Heart left ventricle (tissue), 16 donors: ENCODE measurements at regions of chr17 and their contacts with region 1.

Region 1: DNA sequence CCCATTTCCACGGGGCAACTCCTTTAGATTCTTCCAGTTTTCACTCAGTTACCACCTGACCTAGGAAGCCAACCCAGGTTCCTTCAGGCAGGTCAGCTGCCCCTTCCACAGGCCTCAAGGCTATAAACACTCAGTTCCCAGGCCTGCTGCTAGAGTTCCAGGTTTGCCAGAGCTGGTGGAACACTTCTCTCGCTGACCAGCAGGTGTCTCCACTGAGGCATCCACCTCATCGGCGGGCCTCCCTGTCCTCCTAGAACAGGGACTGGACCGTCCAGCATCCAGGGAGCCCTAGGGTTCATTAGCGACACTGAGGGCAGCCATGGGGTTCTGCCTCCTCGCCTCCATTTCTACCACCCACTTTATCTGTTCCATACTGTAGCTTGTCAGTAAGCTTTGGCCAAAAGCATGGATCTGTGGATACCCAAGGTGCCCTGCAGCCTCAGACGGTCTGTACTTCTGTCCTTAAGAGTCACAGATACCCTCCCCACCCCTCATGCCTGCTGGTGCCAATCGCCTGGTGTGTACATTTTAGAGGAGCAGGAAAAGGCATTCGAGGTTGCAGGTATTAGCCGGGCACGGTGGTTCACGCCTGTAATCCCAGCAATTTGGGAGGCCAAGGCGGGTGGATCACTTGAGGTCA is 29.0 kb downstream of the PIMREG start:
- DNase-seq: peak; percentile 61 to 81 (median 70)
- ATAC-seq: peak in 3 of 4 donors; percentile 73 to 82 (median 78)
- H3K4me3 ChIP-seq: no peak overlapping the region
- H3K27ac ChIP-seq: no peak overlapping the region
- H3K4me1 ChIP-seq: no peaks in the 10 kb centered on the region
- H3K27me3 ChIP-seq: no peaks in the 10 kb centered on the region
- CTCF ChIP-seq: peak; percentile 86 to 96 (median 92)
- POLR2A ChIP-seq: no peak

Region 2: GRCh38 chr17:6548578-6549330 is 75.5 kb after region 1 on chr17:
- intact Hi-C with region 1: loop called in 4 of 10 experiments (anchors 5 to 10 kb)
- DNase-seq: peak in 1 of 5 donors; percentile 47
- ATAC-seq: peak; percentile 71 to 84 (median 78)
- H3K4me3 ChIP-seq: no peak overlapping the region
- H3K27ac ChIP-seq: peak overlapping the region in 1 of 12 donors; percentile 78
- H3K4me1 ChIP-seq: peaks cover 0 to 13% (median 7%) of the 10 kb centered on the region in 12 donors
- H3K27me3 ChIP-seq: peaks cover 0 to 16% (median 0%) of the 10 kb centered on the region in 9 donors
- CTCF ChIP-seq: no peak
- POLR2A ChIP-seq: no peak

Region 3: GRCh38 chr17:6555331-6556120 is 82.3 kb after region 1 on chr17:
- intact Hi-C with region 1: loop called in 4 of 10 experiments (anchors 5 to 10 kb)
- DNase-seq: no peak
- ATAC-seq: peak in 3 of 4 donors; percentile 49 to 54 (median 53)
- H3K4me3 ChIP-seq: peak overlapping the region; percentile 10 to 63 (median 48)
- H3K27ac ChIP-seq: peak overlapping the region in 1 of 12 donors; percentile 44
- H3K4me1 ChIP-seq: peaks cover 0 to 19% (median 12%) of the 10 kb centered on the region in 12 donors
- H3K27me3 ChIP-seq: peaks cover 6 to 40% (median 17%) of the 10 kb centered on the region in 9 donors
- CTCF ChIP-seq: no peak
- POLR2A ChIP-seq: no peak

Region 4: DNA sequence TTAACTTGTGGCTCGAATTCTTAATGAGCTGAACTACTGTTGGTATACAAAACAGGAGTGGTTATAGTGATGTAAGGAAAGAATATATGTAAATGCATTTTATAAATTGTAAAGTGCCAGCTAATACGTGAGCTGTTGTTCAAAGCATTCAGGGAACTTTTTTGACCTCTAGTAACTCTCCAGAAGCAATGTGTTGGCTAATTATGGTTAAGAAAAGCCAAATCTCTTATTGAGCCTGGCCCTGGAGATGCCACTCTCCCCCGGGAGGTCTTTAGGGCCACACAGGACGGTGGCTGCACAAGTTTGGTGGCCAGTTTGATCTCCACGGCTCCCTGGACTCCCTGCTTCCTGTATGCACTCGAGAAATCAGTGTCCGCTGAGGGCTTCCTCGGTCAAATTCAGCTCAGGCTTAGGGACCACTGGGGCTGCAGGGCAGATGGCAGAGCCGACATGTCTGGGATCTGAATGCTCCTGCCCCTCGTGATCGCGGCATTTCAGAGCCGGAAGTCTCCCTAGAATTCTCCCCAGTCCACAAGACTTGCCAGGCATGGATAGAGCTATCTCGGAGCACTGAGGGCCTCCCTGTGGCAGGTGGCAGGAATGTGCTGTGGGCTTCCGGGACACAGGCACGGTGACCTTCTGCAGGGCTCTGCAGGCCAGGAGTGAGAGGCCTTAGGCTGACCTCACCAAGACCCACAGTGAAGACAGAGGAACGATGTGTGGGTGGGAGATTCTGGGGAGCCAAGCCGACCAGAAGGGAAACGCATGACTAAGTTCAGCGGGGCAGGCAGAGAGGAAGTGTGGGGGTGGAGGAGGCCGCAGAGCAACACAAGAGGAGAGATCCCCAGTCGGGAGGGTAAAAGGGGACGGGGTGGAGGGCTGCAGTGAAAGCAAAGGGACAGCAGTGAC is 101.7 kb after region 1 on chr17:
- intact Hi-C with region 1: loop called in 5 of 10 experiments (anchors 2 to 10 kb)
- DNase-seq: peak in 4 of 5 donors; percentile 48 to 70 (median 54)
- ATAC-seq: peak; percentile 42 to 88 (median 84)
- H3K4me3 ChIP-seq: no peak overlapping the region
- H3K27ac ChIP-seq: peak overlapping the region in 4 of 12 donors; percentile 13 to 45 (median 28)
- H3K4me1 ChIP-seq: peaks cover 0 to 24% (median 11%) of the 10 kb centered on the region in 12 donors
- H3K27me3 ChIP-seq: no peaks in the 10 kb centered on the region
- CTCF ChIP-seq: no peak
- POLR2A ChIP-seq: no peak

Region 5: GRCh38 chr17:6683081-6683684 is 209.9 kb after region 1 on chr17:
- intact Hi-C with region 1: no loop called
- DNase-seq: no peak
- ATAC-seq: no peak
- H3K4me3 ChIP-seq: no peak overlapping the region
- H3K27ac ChIP-seq: no peak overlapping the region
- H3K4me1 ChIP-seq: no peaks in the 10 kb centered on the region
- H3K27me3 ChIP-seq: peaks cover 0 to 22% (median 5%) of the 10 kb centered on the region in 9 donors
- CTCF ChIP-seq: no peak
- POLR2A ChIP-seq: no peak